ENCODE measurements at regions of chr18 and their contacts with region 1.

Region 1: DNA sequence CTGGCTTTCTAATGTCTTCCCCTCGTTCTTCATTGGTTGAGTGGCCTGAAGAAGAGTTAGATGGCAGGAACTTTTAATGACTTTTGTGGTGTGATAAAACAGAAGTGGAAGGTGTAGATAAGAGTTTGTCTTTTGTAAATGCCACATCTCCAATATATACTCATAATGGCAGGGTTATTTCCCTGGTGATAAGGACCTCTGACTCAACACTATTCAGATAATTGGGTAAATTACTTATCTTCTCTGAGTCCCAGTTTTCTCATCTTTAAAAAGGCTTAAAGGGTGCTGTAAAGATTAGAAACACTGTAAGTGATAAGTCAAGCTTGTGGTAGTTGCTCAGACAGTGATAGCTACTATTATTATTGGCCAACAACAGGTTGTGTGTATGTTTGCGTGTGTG is 9.5 kb downstream of the KLHL14 start:
- DNase-seq: no peak
- ATAC-seq: no peak

Region 2: DNA sequence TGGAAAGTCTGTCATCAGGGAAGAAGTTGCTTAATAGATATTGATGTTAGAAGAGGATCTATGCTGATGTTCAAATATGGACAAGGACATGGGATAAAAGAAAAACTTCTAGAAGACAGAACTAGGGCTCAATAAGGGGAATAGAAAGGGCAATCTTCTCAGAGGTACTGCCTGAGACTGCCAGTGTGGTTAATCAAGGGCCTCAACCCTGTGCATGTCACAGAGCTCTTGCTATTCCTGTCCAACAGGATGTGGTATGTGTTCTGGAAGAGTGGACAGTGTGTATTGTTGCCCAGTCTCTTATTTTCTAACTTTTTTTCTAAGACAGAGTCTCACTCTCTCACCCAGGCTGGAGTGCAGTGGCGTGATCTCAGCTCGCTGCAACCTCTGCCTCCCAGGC is 772.5 kb before region 1 on chr18:
- intact Hi-C with region 1: no loop called
- DNase-seq: no peak
- ATAC-seq: no peak

Region 3: DNA sequence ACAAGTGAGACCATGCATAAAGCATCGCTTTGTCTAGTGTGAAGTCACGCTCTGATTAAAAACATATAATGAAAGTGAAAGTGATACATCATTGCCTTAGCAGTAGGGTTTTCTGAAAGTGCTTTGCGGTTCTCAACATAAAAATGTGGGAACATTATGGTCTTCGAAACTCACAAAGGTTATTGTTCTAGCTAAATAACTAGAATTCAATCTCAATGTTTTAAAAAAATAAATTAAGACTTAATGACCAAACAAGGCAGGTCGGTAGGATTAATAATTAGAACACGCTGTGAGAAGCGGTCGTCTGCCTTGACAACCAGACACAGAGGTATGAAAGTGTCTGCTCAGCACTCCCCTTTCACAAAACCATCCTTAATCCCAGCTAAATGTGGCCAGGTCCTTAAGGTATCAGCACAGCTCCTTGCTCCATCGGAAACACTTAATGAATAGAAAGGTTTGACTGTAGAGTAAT is 32.6 kb before region 1 on chr18:
- intact Hi-C with region 1: no loop called
- DNase-seq: no peak
- ATAC-seq: no peak

Region 4: GRCh38 chr18:32777049-32777448 is 13.8 kb after region 1 on chr18:
- intact Hi-C with region 1: loop called (anchors 2 kb)
- DNase-seq: no peak
- ATAC-seq: no peak

Region 5: GRCh38 chr18:33034945-33035344 is 271.7 kb after region 1 on chr18:
- intact Hi-C with region 1: no loop called
- DNase-seq: no peak
- ATAC-seq: no peak

Region 6: GRCh38 chr18:33304277-33304676 is 541.0 kb after region 1 on chr18:
- intact Hi-C with region 1: no loop called
- DNase-seq: no peak
- ATAC-seq: no peak

Measured in Right ventricle myocardium inferior (tissue), 1 donor.